AG04449 (cell line): ENCODE measurements at regions of chr17 and their contacts with region 1.

Region 1: GRCh38 chr17:40531051-40531991 is 29.9 kb upstream of the TNS4 start:
- DNase-seq: no peak
- H3K4me3 ChIP-seq: no peak overlapping the region
- CTCF ChIP-seq: no peak

Region 2: DNA sequence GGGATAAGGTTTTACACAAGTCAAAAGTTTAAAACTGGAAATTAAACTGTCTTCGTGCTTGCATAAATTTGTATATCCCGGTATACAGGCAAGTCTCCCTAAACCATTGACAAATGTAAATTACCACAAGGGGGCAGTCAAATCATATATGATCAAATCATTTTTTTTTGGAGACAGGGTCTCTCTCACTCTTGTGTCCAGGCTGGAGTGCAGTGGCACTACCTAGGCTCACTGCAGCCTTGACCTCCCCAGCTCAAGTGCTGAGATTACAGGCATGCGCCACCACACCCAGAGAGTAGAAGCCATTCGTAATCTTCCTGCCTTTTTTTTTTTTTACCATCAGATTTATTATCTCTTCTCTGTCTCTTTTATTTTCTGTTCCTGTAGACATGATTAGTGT is 132.1 kb before region 1 on chr17:
- CTCF ChIA-PET with region 1: interaction called, 124 read pairs
- POLR2A ChIA-PET with region 1: no interaction called
- DNase-seq: peak; percentile 12
- H3K4me3 ChIP-seq: no peak overlapping the region
- CTCF ChIP-seq: peak; percentile 21

Region 3: GRCh38 chr17:40443583-40444327 is 87.6 kb before region 1 on chr17:
- CTCF ChIA-PET with region 1: interaction called, 337 read pairs
- POLR2A ChIA-PET with region 1: interaction called, 25 read pairs
- DNase-seq: no peak
- H3K4me3 ChIP-seq: peak overlapping the region; percentile 99
- CTCF ChIP-seq: peak; percentile 84

Region 4: GRCh38 chr17:40474419-40475002 is 56.8 kb before region 1 on chr17:
- CTCF ChIA-PET with region 1: interaction called, 140 read pairs
- POLR2A ChIA-PET with region 1: interaction called, 11 read pairs
- DNase-seq: no peak
- H3K4me3 ChIP-seq: no peak overlapping the region
- CTCF ChIP-seq: no peak

Region 5: DNA sequence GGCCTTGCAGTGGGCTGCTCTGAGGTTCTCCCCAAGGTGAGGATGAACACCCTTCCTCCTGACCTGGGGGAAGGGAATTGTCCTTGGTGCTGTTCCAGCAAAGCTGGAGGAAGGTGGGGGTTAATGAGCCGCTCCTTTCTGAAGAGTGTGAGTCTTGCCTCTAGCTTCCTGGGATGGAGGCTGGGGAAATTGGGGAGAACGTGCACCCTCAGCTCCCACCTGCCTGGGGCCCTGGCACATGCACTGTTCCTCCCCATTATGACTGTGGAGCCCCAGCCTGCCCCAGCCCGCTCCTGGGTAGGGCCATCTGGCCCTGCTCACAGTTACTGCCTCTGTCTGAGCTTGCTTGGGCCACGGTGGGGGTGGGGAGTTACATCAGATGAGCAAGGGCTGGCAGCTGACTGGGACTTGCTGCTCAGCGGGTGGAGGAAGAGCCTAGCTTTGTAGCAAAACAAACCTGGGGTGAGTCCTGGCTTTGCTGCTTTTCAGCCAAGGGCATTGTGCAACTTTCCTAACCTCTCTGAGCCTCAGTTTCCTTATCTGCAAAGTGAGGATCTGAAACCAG is 41.0 kb before region 1 on chr17:
- CTCF ChIA-PET with region 1: interaction called, 20 read pairs
- POLR2A ChIA-PET with region 1: no interaction called
- DNase-seq: no peak
- H3K4me3 ChIP-seq: no peak overlapping the region
- CTCF ChIP-seq: no peak

Region 6: GRCh38 chr17:40542558-40543411 is 11.5 kb after region 1 on chr17:
- CTCF ChIA-PET with region 1: interaction called, 562 read pairs
- POLR2A ChIA-PET with region 1: no interaction called
- DNase-seq: peak; percentile 88
- H3K4me3 ChIP-seq: no peak overlapping the region
- CTCF ChIP-seq: no peak